Caco-2 (cell line): ENCODE measurements at regions of chr10 and their contacts with region 1.

Region 1: GRCh38 chr10:104925232-104925851 is 284.3 kb downstream of the SORCS3 start:
- DNase-seq: peak; percentile 38 to 57
- H3K4me3 ChIP-seq: no peak overlapping the region
- H3K4me3 Mint-ChIP-seq: no peak overlapping the region
- H3K27ac Mint-ChIP-seq: no peak overlapping the region
- H3K4me1 ChIP-seq: no peaks in the 10 kb centered on the region
- H3K4me1 Mint-ChIP-seq: no peaks in the 10 kb centered on the region
- H3K27me3 ChIP-seq: no peaks in the 10 kb centered on the region
- H3K27me3 Mint-ChIP-seq: peaks cover 8% of the 10 kb centered on the region
- CTCF ChIP-seq: peak; percentile 46 to 75

Region 2: DNA sequence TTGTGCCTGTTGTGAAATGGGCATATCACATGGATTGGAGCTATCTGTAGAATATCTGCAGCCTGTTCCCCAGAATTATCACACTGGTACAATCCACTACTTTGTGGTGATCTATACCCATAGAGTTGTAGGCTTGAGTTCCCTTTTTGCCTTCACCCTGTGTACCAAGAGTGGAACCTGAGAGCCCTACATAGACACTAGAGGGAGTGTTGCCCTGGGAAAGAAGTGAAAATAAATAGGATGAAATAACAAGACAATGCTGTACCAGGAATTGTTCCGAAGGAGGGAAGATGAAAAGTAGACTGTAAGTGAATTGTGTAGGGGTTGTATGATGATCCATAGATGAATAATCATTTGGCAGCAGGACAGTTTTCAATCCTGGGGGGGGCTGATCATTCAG is 275.3 kb before region 1 on chr10:
- CTCF ChIA-PET with region 1: no interaction called
- POLR2A ChIA-PET with region 1: no interaction called
- intact Hi-C with region 1: loop called (anchors 1 kb)
- DNase-seq: no peak
- H3K4me3 ChIP-seq: no peak overlapping the region
- H3K4me3 Mint-ChIP-seq: no peak overlapping the region
- H3K27ac Mint-ChIP-seq: no peak overlapping the region
- H3K4me1 ChIP-seq: no peaks in the 10 kb centered on the region
- H3K4me1 Mint-ChIP-seq: no peaks in the 10 kb centered on the region
- H3K27me3 ChIP-seq: no peaks in the 10 kb centered on the region
- H3K27me3 Mint-ChIP-seq: peaks cover 23% of the 10 kb centered on the region
- CTCF ChIP-seq: peak in 1 of 2 experiments; percentile 56

Region 3: DNA sequence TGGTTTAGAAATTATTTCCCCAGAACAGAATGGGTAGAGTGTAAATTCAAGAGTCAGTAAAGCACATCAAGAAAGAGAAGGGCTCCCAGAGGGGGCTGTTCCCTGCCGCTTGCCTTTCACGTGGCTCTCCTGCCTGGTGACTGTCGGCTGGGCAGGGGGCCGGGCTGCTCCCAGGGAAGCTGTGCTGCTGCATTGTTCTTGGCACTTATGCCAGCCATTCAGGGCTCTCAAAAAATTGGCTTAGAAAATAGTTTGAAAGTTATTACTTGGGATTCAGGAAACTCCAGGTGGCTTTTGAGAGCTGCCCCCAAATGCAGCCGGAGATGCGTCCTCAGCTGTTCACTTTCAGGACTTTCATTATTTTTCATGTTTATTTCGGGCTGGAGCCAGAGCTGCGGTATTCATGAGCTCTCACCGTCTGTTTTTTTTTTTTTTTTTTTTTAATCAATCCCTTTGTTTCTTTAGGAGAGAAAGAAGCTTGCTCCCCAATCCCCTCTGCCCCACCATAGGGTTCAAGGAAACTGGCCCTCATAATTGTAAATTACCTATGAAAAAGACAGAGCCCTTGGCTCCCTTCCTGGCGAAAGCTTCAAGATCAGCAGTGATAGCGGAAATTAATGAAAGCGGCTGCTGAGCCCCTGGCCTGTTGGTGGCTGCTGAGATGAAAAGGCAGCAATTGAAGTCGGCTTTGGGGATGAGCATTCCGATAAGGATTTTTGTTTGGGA is 190.1 kb before region 1 on chr10:
- CTCF ChIA-PET with region 1: no interaction called
- POLR2A ChIA-PET with region 1: no interaction called
- intact Hi-C with region 1: no loop called
- DNase-seq: no peak
- H3K4me3 ChIP-seq: no peak overlapping the region
- H3K4me3 Mint-ChIP-seq: no peak overlapping the region
- H3K27ac Mint-ChIP-seq: no peak overlapping the region
- H3K4me1 ChIP-seq: no peaks in the 10 kb centered on the region
- H3K4me1 Mint-ChIP-seq: no peaks in the 10 kb centered on the region
- H3K27me3 ChIP-seq: no peaks in the 10 kb centered on the region
- H3K27me3 Mint-ChIP-seq: peaks cover 10% of the 10 kb centered on the region
- CTCF ChIP-seq: no peak

Region 4: DNA sequence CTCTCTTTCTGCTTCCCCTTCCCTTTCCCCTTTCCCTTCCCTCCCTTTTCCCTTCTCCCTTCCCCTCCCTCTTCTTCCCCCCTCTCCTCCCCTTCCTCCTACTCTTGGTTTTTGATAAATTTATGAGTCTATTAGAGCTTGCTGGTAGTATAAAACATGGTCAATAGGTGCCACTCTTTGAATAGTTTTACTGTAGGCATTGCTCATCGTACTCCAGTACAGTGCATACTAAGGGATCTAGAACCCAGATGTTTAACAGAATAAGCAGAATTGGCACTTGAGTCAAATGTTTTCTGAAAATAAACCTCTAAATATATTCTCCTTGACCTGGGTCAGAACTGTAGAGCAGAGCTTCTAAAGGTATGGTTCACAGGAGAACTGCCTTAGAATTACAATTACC is 157.6 kb before region 1 on chr10:
- CTCF ChIA-PET with region 1: no interaction called
- POLR2A ChIA-PET with region 1: no interaction called
- intact Hi-C with region 1: loop called (anchors 1 kb)
- DNase-seq: no peak
- H3K4me3 ChIP-seq: no peak overlapping the region
- H3K4me3 Mint-ChIP-seq: no peak overlapping the region
- H3K27ac Mint-ChIP-seq: no peak overlapping the region
- H3K4me1 ChIP-seq: no peaks in the 10 kb centered on the region
- H3K4me1 Mint-ChIP-seq: no peaks in the 10 kb centered on the region
- H3K27me3 ChIP-seq: no peaks in the 10 kb centered on the region
- H3K27me3 Mint-ChIP-seq: peaks cover 3% of the 10 kb centered on the region
- CTCF ChIP-seq: no peak

Region 5: GRCh38 chr10:104937572-104937971 is 12.2 kb after region 1 on chr10:
- CTCF ChIA-PET with region 1: no interaction called
- POLR2A ChIA-PET with region 1: no interaction called
- intact Hi-C with region 1: no loop called
- DNase-seq: no peak
- H3K4me3 ChIP-seq: no peak overlapping the region
- H3K4me3 Mint-ChIP-seq: no peak overlapping the region
- H3K27ac Mint-ChIP-seq: no peak overlapping the region
- H3K4me1 ChIP-seq: no peaks in the 10 kb centered on the region
- H3K4me1 Mint-ChIP-seq: no peaks in the 10 kb centered on the region
- H3K27me3 ChIP-seq: no peaks in the 10 kb centered on the region
- H3K27me3 Mint-ChIP-seq: peaks cover 3% of the 10 kb centered on the region
- CTCF ChIP-seq: no peak

Region 6: DNA sequence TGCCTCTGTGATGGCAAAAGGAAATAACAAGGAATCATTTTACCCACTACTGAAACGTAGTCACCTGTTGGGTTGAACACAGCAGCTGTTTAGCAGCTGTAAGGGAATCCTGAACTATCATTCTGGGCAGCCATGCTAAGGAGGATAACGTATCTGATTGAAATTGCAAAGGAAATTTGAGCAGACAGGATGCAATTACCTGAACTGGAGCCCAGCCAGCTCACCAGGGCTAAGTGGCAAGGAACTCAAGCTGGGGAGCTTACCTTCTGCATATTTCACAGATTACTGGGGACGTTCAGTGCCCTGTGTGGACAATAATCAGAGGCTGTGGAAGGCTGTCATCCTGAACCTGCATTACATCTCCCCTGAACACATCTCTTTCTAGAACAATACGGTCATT is 366.2 kb after region 1 on chr10:
- CTCF ChIA-PET with region 1: no interaction called
- POLR2A ChIA-PET with region 1: no interaction called
- intact Hi-C with region 1: no loop called
- DNase-seq: no peak
- H3K4me3 ChIP-seq: no peak overlapping the region
- H3K4me3 Mint-ChIP-seq: no peak overlapping the region
- H3K27ac Mint-ChIP-seq: no peak overlapping the region
- H3K4me1 ChIP-seq: no peaks in the 10 kb centered on the region
- H3K4me1 Mint-ChIP-seq: no peaks in the 10 kb centered on the region
- H3K27me3 ChIP-seq: no peaks in the 10 kb centered on the region
- H3K27me3 Mint-ChIP-seq: peaks cover 3% of the 10 kb centered on the region
- CTCF ChIP-seq: no peak